Left cardiac atrium (tissue), 4 donors: ENCODE measurements at regions of chr19 and their contacts with region 1.

Region 1: DNA sequence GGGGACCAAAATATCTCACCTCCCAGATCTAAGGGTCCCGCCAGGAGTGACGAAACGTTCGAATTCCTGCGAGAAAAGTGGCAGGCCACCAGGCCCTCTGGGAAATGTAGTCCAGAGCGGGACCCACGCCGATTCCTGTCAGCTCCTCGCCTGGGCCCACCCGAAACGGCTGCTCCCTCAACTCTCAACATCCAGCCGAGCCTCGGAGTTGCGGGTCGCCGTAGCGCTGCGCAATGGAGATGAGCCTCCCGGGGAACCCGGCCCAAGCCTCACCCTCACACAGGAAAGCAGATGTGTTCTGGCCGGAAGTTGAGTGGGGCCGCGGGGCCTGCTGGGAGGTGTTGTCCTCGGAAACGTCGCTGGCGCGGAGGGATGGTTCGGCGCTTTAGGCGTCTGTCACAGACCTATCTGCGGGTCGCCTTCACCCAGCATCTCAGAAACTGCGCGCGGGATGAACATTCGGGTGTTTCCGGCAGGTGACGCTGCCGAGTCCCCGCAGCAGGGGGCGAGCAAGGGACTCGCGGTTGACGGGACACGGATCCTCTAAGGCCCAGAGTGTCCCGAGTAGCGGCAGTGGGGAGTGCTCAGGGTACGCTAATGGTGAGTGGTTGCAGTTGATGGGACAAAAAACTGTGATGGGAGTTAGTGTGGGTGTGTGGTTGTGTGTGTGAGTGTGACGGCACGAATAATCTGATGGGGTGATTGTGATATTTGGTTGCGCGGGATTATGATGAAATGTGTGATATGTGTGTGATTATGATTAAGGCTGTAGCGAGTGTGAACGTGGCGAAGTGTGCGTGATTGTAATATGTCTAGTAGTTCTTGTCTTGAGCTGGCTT is at the starts of genes ZNF568 and ZNF829:
- DNase-seq: peak; percentile 92
- ATAC-seq: peak; percentile 98 to 99
- total RNA-seq, gene ZNF568: 6.1 to 9.2 TPM
- total RNA-seq, gene ZNF829: 2.8 to 2.9 TPM

Region 2: GRCh38 chr19:36837906-36838783 is 78.1 kb before region 1 on chr19 and contains the start of gene ZNF790:
- intact Hi-C with region 1: loop called in 1 of 2 experiments (anchors 10 kb)
- DNase-seq: peak; percentile 91
- ATAC-seq: peak; percentile 99 to 100
- total RNA-seq, gene ZNF790: 6.1 to 8.7 TPM